ENCODE measurements at regions of chr6 and their contacts with region 1.

Region 1: GRCh38 chr6:135423649-135424128 is 73.9 kb downstream of the AHI1 start:
- DNase-seq: peak; percentile 18
- H3K4me3 ChIP-seq: no peak overlapping the region; a peak in 1 of 4 replicates
- H3K27ac ChIP-seq: no peak overlapping the region
- H3K4me1 ChIP-seq: no peaks in the 10 kb centered on the region
- H3K27me3 ChIP-seq: no peaks in the 10 kb centered on the region
- CTCF ChIP-seq: peak; percentile 73
- EP300 ChIP-seq: no peak
- RAD21 ChIP-seq: peak; percentile 81

Region 2: GRCh38 chr6:135145063-135145800 is 278.5 kb before region 1 on chr6:
- CTCF ChIA-PET with region 1: interaction called, 36 read pairs
- POLR2A ChIA-PET with region 1: no interaction called
- DNase-seq: peak; percentile 25
- H3K4me3 ChIP-seq: no peak overlapping the region; a peak in 1 of 4 replicates
- H3K27ac ChIP-seq: no peak overlapping the region
- H3K4me1 ChIP-seq: peaks cover 0 to 12% of the 10 kb centered on the region in 2 experiments; a peak in 1 of 4 replicates
- H3K27me3 ChIP-seq: no peaks in the 10 kb centered on the region
- CTCF ChIP-seq: peak; percentile 74
- EP300 ChIP-seq: no peak
- RAD21 ChIP-seq: peak; percentile 82

Region 3: DNA sequence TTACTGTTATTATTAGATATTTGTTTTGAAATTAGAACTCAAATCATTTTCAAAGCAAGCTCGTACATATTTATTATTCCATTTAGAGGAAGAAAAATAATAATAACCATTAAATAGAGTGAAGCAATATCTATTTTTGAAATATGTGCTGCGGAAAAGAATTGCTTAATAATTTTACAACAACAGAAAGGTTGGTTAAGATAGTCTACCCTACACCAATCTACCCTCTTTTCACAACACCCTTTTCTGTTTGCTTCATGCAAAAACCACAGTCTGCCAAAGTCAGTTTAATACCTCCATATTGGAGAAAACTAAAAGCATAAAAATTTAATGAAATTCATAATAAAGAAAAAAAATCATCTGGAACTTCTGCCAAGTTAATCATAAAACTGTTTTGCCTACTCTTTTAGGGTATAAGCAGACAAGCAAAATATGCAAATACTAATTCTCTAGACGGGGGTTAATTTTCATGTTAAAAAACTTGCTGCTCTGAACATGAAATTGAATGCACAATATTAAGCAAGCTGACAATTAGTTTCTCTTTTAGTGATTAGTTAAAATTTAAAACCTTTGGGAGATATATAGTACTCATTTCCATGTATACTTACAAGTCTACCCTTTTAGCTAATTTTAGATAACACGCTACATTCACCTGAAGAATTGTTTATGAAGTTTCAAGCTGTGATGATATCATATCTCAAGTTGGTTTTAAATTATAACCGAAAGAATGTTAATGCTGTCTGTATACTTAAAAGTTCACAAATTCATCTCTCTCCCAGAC is 26.3 kb before region 1 on chr6:
- CTCF ChIA-PET with region 1: interaction called, 10 read pairs
- POLR2A ChIA-PET with region 1: no interaction called
- DNase-seq: no peak
- H3K4me3 ChIP-seq: no peak overlapping the region
- H3K27ac ChIP-seq: no peak overlapping the region
- H3K4me1 ChIP-seq: no peaks in the 10 kb centered on the region
- H3K27me3 ChIP-seq: no peaks in the 10 kb centered on the region
- CTCF ChIP-seq: no peak
- EP300 ChIP-seq: no peak
- RAD21 ChIP-seq: no peak

Measured in SK-N-SH (cell line).